ENCODE measurements at regions of chr11 and their contacts with region 1.

Region 1: GRCh38 chr11:6377902-6378639 is 12.2 kb upstream of the SMPD1 start:
- DNase-seq: peak; percentile 37
- H3K4me3 Mint-ChIP-seq: peak overlapping the region; percentile 45
- H3K27ac Mint-ChIP-seq: peak overlapping the region; percentile 90
- H3K4me1 Mint-ChIP-seq: peaks cover 37% of the 10 kb centered on the region
- H3K27me3 Mint-ChIP-seq: no peaks in the 10 kb centered on the region

Region 2: GRCh38 chr11:6303661-6304060 is 74.4 kb before region 1 on chr11:
- CTCF ChIA-PET with region 1: no interaction called
- POLR2A ChIA-PET with region 1: no interaction called
- DNase-seq: no peak
- H3K4me3 Mint-ChIP-seq: no peak overlapping the region
- H3K27ac Mint-ChIP-seq: no peak overlapping the region
- H3K4me1 Mint-ChIP-seq: no peaks in the 10 kb centered on the region
- H3K27me3 Mint-ChIP-seq: peaks cover 35% of the 10 kb centered on the region

Region 3: GRCh38 chr11:6315811-6316425 is 62.2 kb before region 1 on chr11:
- CTCF ChIA-PET with region 1: no interaction called
- POLR2A ChIA-PET with region 1: no interaction called
- DNase-seq: peak; percentile 43
- H3K4me3 Mint-ChIP-seq: no peak overlapping the region
- H3K27ac Mint-ChIP-seq: no peak overlapping the region
- H3K4me1 Mint-ChIP-seq: peaks cover 12% of the 10 kb centered on the region
- H3K27me3 Mint-ChIP-seq: peaks cover 62% of the 10 kb centered on the region

Region 4: DNA sequence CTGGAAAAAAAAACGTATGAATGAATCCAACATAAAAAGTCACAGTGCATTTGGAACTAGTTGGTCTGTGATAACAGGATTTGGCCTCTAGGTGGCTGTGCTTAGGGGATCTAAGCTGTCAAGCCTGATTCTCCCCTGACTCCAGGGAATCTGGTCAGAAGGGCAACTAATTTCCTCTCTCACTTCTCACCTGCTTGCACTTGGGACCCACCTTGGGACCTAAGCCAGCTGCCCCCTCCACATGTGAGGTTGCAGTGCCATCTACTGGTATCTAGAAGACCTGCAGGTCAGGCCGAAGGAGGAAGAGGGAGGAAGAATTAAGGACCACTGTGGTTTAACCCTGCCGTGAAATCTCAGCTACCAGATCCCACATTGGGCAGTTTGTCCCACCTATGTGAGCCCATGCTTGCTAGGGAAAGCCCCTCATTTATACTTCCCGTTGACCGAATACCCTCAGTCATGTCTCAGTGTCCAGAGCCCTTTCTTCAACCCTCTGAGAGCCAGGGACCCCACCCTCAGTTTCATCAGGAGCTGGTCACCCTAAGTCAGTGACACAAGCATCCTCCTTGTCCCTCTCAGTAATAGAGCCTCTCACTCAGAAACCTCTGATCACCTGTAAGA is 24.6 kb before region 1 on chr11:
- CTCF ChIA-PET with region 1: interaction called, 16 read pairs
- POLR2A ChIA-PET with region 1: no interaction called
- DNase-seq: peak; percentile 68
- H3K4me3 Mint-ChIP-seq: no peak overlapping the region
- H3K27ac Mint-ChIP-seq: peak overlapping the region; percentile 2
- H3K4me1 Mint-ChIP-seq: peaks cover 3% of the 10 kb centered on the region
- H3K27me3 Mint-ChIP-seq: peaks cover 2% of the 10 kb centered on the region

Region 5: DNA sequence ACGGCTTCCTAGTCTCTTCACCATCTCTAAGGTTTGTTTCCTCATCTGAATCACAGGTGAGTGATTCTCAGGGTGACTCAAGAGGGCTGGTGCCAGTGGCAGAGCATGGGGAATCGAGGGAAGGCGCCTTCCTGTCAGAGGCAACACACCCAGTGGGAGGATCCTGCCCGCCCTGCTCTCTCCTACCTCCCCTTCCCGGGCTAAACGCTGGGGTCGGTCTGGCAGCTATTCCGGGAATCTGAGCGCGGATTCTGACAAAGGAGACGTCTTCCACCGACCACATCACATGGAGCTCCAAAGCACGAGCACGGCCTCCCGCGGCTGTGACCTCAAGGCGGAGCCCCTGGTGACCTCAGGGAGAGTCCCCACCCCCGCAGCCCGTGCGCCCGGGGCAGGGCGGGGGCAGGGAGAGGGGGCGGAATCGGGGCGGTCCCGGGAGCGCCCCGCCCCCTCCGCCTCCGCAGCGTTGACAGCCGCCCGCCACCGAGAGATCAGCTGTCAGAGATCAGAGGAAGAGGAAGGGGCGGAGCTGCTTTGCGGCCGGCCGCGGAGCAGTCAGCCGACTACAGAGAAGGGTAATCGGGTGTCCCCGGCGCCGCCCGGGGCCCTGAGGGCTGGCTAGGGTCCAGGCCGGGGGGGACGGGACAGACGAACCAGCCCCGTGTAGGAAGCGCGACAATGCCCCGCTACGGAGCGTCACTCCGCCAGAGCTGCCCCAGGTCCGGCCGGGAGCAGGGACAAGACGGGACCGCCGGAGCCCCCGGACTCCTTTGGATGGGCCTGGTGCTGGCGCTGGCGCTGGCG is 12.1 kb after region 1 on chr11 and contains the start of gene SMPD1:
- CTCF ChIA-PET with region 1: interaction called, 41 read pairs
- POLR2A ChIA-PET with region 1: interaction called, 5 read pairs
- DNase-seq: peak; percentile 94
- H3K4me3 Mint-ChIP-seq: peak within 1 kb of the TSS; percentile 88
- H3K27ac Mint-ChIP-seq: peak within 1 kb of the TSS; percentile 93
- H3K4me1 Mint-ChIP-seq: peaks cover 45% of the 10 kb centered on the region
- H3K27me3 Mint-ChIP-seq: no peaks in the 10 kb centered on the region
- total RNA-seq, gene SMPD1: 46.1 to 53.6 TPM

Region 6: GRCh38 chr11:6431861-6432260 is 53.8 kb after region 1 on chr11:
- CTCF ChIA-PET with region 1: interaction called, 30 read pairs
- POLR2A ChIA-PET with region 1: interaction called, 3 read pairs
- DNase-seq: no peak
- H3K4me3 Mint-ChIP-seq: no peak overlapping the region
- H3K27ac Mint-ChIP-seq: no peak overlapping the region
- H3K4me1 Mint-ChIP-seq: peaks cover 6% of the 10 kb centered on the region
- H3K27me3 Mint-ChIP-seq: peaks cover 4% of the 10 kb centered on the region

Region 7: DNA sequence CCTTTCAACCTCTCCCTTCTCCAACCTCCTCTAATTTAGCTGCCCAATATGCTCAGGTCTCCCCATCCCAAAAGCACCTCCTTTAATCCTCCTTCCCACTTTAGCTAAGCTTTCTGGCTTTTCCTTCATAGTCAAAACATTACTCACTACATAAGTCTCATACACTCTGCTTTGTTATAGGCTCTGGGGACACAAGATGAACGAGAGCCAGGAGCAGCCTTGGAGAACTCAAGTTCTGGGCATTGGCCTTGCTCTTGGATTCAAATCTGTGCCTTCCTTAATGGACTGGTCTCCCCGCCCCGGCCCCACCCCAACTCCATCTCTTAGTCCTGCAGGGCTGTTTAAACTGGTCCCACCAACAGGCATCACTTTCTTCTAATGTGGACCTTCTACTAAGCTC is 74.1 kb after region 1 on chr11:
- CTCF ChIA-PET with region 1: interaction called, 13 read pairs
- POLR2A ChIA-PET with region 1: no interaction called
- DNase-seq: no peak
- H3K4me3 Mint-ChIP-seq: no peak overlapping the region
- H3K27ac Mint-ChIP-seq: no peak overlapping the region
- H3K4me1 Mint-ChIP-seq: no peaks in the 10 kb centered on the region
- H3K27me3 Mint-ChIP-seq: no peaks in the 10 kb centered on the region

Region 8: DNA sequence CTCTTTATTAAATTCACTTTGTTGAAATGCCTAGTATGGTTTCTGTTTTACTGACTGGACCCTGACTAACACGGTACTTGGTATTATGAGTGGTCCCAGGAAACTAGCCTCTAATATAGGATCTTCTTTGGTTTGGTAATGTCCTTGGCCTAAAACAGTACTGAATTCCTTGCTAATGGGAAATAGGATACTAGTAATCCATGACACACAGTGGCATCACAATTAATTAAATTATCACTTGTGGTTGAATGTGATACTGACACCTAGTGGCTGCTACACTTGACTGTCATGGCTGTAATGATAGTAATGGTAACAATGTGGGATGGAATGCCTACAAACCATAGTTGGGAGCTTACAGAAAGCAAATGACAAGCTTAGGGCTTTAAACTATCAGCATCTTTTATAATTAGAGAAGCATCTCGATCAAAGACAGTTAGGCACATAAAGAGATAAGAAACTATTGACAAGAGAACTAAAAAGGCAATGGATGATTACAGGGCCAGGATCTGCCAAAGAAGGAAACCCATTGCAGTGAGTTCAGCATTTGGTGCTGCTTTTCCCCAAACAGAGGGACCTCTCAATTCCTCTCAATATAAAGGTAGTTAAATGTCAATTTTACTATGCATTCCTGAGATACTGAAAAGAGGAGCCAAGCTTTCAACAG is 127.6 kb after region 1 on chr11:
- CTCF ChIA-PET with region 1: interaction called, 12 read pairs
- POLR2A ChIA-PET with region 1: no interaction called
- DNase-seq: peak; percentile 50
- H3K4me3 Mint-ChIP-seq: no peak overlapping the region
- H3K27ac Mint-ChIP-seq: no peak overlapping the region
- H3K4me1 Mint-ChIP-seq: peaks cover 4% of the 10 kb centered on the region
- H3K27me3 Mint-ChIP-seq: no peaks in the 10 kb centered on the region